ENCODE measurements at regions of chr10 and their contacts with region 1.

Region 1: GRCh38 chr10:121974535-121975294 is at the start of gene NSMCE4A:
- DNase-seq: peak; percentile 82
- ATAC-seq: peak; percentile 90
- H3K4me3 Mint-ChIP-seq: peak within 1 kb of the TSS; percentile 86
- H3K27ac Mint-ChIP-seq: peak within 1 kb of the TSS; percentile 73
- H3K4me1 Mint-ChIP-seq: peaks cover 13% of the 10 kb centered on the region
- H3K27me3 Mint-ChIP-seq: no peaks in the 10 kb centered on the region
- total RNA-seq, gene NSMCE4A: 65.6 to 72.3 TPM

Region 2: GRCh38 chr10:121927841-121928527 is 46.7 kb before region 1 on chr10 and contains the start of gene ATE1:
- POLR2A ChIA-PET with region 1: interaction called, 11 read pairs
- DNase-seq: peak; percentile 89
- ATAC-seq: peak; percentile 94
- H3K4me3 Mint-ChIP-seq: peak within 1 kb of the TSS; percentile 93
- H3K27ac Mint-ChIP-seq: peak within 1 kb of the TSS; percentile 95
- H3K4me1 Mint-ChIP-seq: peaks cover 7% of the 10 kb centered on the region
- H3K27me3 Mint-ChIP-seq: no peaks in the 10 kb centered on the region
- total RNA-seq, gene ATE1: 21.9 to 27.1 TPM

Region 3: DNA sequence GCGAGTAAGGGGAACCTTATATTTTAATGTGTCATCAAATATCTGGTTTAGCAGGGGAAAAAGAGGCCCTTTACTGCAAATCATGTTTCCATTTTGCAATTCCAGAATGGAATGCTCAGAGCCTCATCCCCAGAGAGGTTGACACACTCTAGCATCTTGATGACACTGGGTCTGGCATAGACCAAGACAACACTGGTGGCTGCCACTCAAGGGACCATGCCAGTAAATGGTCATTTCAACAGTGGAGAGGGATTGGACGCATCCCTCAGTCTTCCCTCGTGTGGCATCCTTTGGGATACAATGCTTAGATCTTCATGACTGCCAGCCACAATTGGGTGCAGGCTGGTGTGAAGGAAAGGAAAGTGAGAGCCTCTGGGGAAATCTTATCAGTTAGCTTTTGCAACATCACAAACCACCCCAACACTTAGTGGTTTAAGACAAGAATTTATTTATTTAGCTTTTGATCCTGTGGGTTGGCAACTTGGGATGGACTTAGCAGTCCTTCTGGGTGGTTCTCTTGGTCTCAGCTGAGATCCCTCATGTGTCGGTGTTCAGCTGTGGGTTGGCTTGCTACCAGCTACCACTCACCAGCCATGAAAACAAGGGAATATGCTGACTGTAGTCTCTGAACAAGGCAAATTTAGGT is 35.8 kb after region 1 on chr10:
- POLR2A ChIA-PET with region 1: no interaction called
- DNase-seq: no peak
- ATAC-seq: no peak
- H3K4me3 Mint-ChIP-seq: no peak overlapping the region
- H3K27ac Mint-ChIP-seq: no peak overlapping the region
- H3K4me1 Mint-ChIP-seq: no peaks in the 10 kb centered on the region
- H3K27me3 Mint-ChIP-seq: peaks cover 12% of the 10 kb centered on the region

Region 4: DNA sequence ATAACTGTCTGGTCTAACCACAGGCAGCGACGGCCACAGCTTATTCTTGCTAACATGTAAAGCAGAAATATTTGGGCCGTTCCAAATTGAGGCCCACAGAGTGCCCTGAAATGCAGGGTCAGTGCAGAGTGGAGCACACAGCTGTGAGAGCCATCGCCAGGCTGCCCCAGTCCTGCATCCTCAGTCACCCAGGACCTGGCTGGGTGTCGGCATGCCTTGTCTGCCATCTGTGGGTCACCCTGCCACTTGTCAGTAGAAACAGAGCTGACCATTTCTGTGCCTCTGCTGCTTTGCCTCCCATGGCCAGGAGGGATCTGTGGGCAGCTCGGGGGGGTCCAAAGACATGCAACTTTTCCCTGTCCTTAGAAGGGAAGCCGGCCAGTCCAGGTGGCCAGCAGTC is 239.1 kb after region 1 on chr10:
- POLR2A ChIA-PET with region 1: no interaction called
- DNase-seq: no peak
- ATAC-seq: no peak
- H3K4me3 Mint-ChIP-seq: no peak overlapping the region
- H3K27ac Mint-ChIP-seq: no peak overlapping the region
- H3K4me1 Mint-ChIP-seq: no peaks in the 10 kb centered on the region
- H3K27me3 Mint-ChIP-seq: peaks cover 6% of the 10 kb centered on the region

Measured in activated naive CD8-positive, alpha-beta T cell treated with anti-CD3 and anti-CD28 coated beads, Interleukin-2, amount 10 ng/mL, durations not matched to agents 7 days and 5 days (primary cell).